Psoas muscle (tissue), 8 donors: ENCODE measurements at regions of chr1 and their contacts with region 1.

Region 1: DNA sequence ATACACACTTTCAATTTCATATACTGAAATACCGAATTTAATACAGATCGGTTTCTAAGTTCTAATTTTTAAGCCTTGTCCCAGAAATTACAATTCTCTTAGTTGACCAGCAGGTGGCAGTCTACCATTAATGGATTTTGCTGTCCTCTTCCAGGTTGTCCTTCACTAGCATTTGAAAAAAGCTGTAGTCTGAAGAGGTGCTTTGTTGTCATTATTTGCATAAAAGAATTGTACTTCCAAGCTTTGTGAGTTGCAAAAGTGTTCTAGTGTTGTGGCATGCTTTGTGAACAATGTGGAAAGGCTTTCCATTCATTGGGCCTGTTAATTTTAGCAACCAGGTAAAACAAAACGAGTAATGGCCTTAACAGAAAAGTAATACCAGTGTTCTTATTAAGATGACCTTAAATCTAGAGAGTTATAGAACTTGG is 193.6 kb downstream of the RPS6KC1 start:
- DNase-seq: no peak
- ATAC-seq: no peak
- H3K4me3 ChIP-seq: no peak overlapping the region
- H3K27ac ChIP-seq: no peak overlapping the region
- H3K4me1 ChIP-seq: no peaks in the 10 kb centered on the region
- H3K27me3 ChIP-seq: no peaks in the 10 kb centered on the region
- CTCF ChIP-seq: peak; percentile 80

Region 2: DNA sequence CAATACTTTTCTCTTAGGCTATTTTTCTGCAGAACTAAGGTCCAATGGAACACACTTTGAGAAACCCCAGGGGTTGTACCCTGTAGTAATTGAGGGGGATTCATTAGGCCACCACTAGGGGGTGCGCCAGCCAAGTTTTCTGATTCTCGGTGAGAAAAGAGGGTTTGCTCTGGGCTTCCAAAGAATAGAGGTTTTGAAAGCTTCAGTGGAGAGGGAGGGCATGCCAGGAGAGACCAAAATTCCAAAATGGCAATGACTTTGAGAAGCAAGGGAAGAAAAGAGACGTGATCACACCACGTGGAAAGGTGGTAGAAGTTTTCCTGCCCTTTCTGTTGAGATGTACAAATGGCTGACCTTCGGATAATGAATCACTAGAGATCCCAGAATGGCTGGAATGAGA is 129.7 kb after region 1 on chr1:
- intact Hi-C with region 1: loop called in 1 of 2 experiments (anchors 10 kb)
- DNase-seq: peak; percentile 41 to 68
- ATAC-seq: peak; percentile 63 to 85 (median 71)
- H3K4me3 ChIP-seq: no peak overlapping the region
- H3K27ac ChIP-seq: no peak overlapping the region
- H3K4me1 ChIP-seq: no peaks in the 10 kb centered on the region
- H3K27me3 ChIP-seq: no peaks in the 10 kb centered on the region
- CTCF ChIP-seq: peak; percentile 85

Region 3: DNA sequence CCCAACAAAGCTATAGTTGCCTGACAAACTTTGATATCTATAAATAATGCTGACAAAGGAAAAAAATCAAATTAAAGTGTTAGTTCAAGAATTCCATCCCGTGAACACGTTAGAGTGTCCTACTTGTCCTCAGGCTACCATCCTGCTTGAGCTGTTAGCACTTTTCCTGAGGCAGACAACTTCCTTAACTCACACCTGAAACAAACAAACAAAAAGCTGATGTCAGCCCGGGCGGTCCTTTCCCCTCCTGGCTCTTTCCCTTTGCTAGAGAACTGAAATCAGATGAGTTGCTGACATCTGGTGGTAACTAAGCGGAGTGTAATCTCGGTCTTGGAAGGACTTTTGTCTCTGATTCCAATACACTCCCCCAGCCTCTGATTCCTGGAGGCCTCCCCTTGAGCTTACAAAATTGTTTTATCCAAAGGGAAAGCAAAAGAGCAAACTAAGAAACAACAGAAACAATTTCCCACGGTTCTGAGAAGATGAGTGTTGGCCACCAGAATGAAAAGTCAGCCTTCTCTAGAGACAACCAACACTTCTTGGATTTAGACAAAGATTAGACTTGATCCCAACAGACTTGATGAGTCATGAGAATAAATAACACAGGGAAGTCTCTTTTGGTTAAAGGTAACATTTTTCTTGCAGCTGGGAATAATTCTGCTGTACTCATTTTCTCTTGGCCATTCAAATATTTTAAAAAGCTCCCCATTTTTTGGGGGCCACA is 878.5 kb after region 1 on chr1:
- intact Hi-C with region 1: loop called (anchors 5 to 10 kb)
- DNase-seq: no peak
- ATAC-seq: peak; percentile 70 to 92 (median 82)
- H3K4me3 ChIP-seq: no peak overlapping the region
- H3K27ac ChIP-seq: no peak overlapping the region
- H3K4me1 ChIP-seq: no peaks in the 10 kb centered on the region
- H3K27me3 ChIP-seq: no peaks in the 10 kb centered on the region
- CTCF ChIP-seq: peak; percentile 60